ENCODE measurements at regions of chr11 and their contacts with region 1.

Region 1: DNA sequence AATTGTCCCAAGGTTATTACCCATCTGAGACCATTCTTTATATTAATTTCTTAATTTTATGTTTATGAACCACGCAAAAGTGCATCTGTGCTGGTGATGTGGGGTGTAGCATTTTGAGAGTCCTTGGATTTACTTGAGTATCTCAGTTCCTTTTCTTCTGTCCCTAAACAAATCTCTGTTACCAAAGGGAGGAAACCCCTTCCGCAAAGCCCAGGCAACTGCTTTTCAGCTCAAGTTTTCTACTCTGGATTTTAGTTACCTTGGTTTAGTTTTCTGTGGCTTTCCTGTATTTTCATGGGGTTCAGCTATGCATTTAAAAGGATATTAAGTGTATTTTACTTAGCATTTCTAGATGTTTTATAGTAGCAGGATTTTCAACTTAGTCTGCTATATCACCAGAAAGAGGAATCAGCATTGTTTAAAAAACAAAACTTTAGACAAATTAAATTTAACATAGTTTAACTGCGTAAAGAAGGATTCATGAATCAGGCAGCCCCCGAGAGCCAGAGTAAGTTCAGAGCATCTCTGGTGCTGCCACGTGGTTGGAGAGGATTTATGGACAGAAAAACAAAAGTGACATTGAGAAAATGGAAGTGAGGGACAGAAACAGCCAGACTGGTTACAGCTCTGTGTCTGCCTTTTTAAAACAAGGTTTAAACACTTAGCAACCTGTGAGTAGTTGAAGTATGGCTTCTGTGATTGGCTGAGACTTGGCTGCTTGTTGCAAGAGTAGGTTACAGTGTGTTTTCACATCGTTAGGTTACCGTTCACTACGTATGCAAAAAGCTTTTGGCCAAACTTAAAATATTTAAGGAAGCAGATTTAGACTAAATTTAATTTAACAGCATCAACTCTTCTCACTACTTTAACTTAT is 9.6 kb downstream of the ADM start:
- DNase-seq: peak in 2 of 5 donors; percentile 51 to 54
- H3K4me3 ChIP-seq: no peak overlapping the region
- H3K27ac ChIP-seq: no peak overlapping the region
- H3K4me1 ChIP-seq: peaks cover 0 to 15% (median 13%) of the 10 kb centered on the region in 3 donors
- H3K27me3 ChIP-seq: no peaks in the 10 kb centered on the region
- CTCF ChIP-seq: no peak

Region 2: DNA sequence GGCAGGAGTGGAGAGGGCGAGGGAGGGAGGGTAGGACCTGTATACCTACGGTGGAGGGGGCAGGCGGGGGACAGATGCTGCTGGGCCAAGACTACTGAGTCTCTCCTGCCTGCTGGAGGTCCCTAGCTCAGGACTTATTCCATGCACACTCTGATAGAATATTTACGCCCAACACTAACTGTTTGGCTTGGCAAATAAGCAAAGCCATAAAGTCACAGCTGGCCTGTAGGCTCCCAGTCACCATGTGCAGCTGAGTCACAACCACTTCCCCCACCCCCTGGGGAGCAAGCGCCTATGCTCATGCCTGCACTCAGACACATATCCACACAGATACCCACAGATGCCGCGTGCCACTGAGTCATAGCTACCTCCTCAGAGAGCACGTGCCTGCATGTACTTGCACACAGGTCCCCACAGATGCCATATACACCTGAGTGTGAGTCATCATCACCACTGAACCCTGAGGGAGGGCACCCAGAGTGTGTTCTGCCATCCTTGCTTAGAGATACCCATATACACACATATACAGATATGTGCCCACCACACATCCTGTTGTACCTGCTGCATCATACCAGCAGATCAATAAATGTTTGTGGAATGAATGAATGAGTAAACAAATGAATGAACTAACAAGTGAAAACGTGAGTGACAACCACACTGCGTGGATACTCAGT is 554.8 kb before region 1 on chr11:
- intact Hi-C with region 1: loop called (anchors 10 kb)
- DNase-seq: peak in 4 of 5 donors; percentile 37 to 97 (median 79)
- H3K4me3 ChIP-seq: no peak overlapping the region
- H3K27ac ChIP-seq: peak overlapping the region; percentile 94 to 97
- H3K4me1 ChIP-seq: peaks cover 0 to 26% (median 17%) of the 10 kb centered on the region in 3 donors
- H3K27me3 ChIP-seq: no peaks in the 10 kb centered on the region
- CTCF ChIP-seq: no peak

Measured in kidney (tissue), 22 donors.